Activated CD4-positive, alpha-beta memory T cell treated with anti-CD3 and anti-CD28 coated beads, Interleukin-2, amount 10 ng/mL, durations not matched to agents 7 days and 5 days (primary cell): ENCODE measurements at regions of chr15 and their contacts with region 1.

Region 1: GRCh38 chr15:64681424-64682024 is 93.9 kb downstream of the RBPMS2 start:
- DNase-seq: no peak
- H3K4me3 Mint-ChIP-seq: no peak overlapping the region
- H3K27ac Mint-ChIP-seq: no peak overlapping the region
- H3K4me1 Mint-ChIP-seq: no peaks in the 10 kb centered on the region
- H3K27me3 Mint-ChIP-seq: no peaks in the 10 kb centered on the region

Region 2: GRCh38 chr15:64697911-64698369 is 16.4 kb after region 1 on chr15:
- CTCF ChIA-PET with region 1: interaction called, 17 read pairs
- POLR2A ChIA-PET with region 1: no interaction called
- DNase-seq: no peak
- H3K4me3 Mint-ChIP-seq: no peak overlapping the region
- H3K27ac Mint-ChIP-seq: peak overlapping the region; percentile 8
- H3K4me1 Mint-ChIP-seq: peaks cover 57% of the 10 kb centered on the region
- H3K27me3 Mint-ChIP-seq: no peaks in the 10 kb centered on the region